ENCODE measurements at regions of chr4 and their contacts with region 1.

Region 1: DNA sequence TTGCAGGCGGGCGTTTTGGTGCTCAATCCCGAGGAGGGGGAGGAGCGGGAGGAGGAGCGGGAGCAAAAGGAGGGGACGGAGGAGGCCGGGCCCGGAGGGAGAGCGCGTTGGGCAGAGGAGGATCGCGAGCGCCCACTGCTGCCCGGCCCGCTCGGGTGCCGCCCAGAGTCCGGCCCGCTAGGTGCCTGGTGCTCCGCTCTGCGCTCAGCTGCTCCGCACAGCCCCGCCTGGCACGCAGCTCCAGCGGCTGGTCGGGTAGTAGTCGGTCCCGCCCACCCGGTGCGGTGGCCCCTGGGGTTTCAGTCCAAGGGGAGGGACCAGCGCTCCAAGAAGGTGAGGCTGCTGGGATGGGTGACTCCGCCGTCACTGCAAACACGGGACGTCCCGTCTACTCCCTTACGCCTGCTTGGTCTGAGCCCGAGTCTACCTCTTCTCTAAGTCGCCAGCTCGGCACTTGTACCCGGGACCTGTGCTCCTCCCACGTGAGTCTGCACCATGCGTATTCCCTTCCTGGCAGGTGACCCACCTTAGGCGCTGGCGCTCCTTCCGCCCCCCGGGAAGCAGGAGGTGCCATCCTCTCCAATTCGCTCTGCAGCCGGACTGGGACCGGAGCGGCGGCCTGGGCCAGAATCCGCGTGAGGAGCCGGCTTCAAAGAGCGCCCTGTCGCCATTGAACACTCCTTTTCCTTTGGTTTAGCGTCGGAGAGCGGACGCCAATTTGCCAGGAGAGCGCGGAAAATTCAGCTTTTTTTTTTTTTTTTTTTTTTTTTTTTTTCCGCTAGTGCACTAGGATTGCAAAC is 405 bp upstream of the HS3ST1 start:
- DNase-seq: peak; percentile 23 to 80
- H3K4me3 ChIP-seq: peak overlapping the region; percentile 60 to 67
- H3K27ac ChIP-seq: peak overlapping the region in 1 of 2 donors; percentile 49
- H3K4me1 ChIP-seq: peaks cover 0 to 10% of the 10 kb centered on the region in 2 donors
- H3K27me3 ChIP-seq: no peaks in the 10 kb centered on the region
- CTCF ChIP-seq: peak; percentile 36 to 64 (median 51)

Region 2: GRCh38 chr4:10582059-10582686 is 846.9 kb before region 1 on chr4:
- intact Hi-C with region 1: loop called (anchors 5 kb)
- DNase-seq: peak in 1 of 2 donors; percentile 69
- H3K4me3 ChIP-seq: no peak overlapping the region
- H3K27ac ChIP-seq: no peak overlapping the region
- H3K4me1 ChIP-seq: no peaks in the 10 kb centered on the region
- H3K27me3 ChIP-seq: no peaks in the 10 kb centered on the region
- CTCF ChIP-seq: peak; percentile 31 to 71 (median 62)

Region 3: GRCh38 chr4:11614399-11614798 is 185.3 kb after region 1 on chr4:
- intact Hi-C with region 1: no loop called
- DNase-seq: no peak
- H3K4me3 ChIP-seq: no peak overlapping the region
- H3K27ac ChIP-seq: no peak overlapping the region
- H3K4me1 ChIP-seq: no peaks in the 10 kb centered on the region
- H3K27me3 ChIP-seq: no peaks in the 10 kb centered on the region
- CTCF ChIP-seq: no peak